ENCODE measurements at regions of chr1 and their contacts with region 1.

Region 1: DNA sequence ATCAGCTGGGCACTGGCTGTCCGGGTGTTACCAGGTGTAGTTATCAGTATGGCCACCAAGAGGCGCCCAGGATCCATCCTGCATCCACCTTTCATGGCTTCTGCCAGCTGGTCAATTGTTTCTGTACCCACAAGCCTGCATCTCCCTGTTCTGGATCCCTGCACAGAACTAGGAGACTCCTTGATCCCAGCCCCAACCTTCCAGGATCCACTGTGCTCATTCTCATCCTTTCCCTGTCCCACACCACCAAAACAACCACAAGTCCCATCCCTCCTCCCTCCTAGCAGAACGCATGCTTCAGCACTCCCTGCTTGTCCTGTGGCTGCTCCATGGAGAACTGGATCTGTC is 27.2 kb upstream of the FOXE3 start:
- DNase-seq: peak; percentile 73
- CTCF ChIP-seq: peak; percentile 56

Region 2: DNA sequence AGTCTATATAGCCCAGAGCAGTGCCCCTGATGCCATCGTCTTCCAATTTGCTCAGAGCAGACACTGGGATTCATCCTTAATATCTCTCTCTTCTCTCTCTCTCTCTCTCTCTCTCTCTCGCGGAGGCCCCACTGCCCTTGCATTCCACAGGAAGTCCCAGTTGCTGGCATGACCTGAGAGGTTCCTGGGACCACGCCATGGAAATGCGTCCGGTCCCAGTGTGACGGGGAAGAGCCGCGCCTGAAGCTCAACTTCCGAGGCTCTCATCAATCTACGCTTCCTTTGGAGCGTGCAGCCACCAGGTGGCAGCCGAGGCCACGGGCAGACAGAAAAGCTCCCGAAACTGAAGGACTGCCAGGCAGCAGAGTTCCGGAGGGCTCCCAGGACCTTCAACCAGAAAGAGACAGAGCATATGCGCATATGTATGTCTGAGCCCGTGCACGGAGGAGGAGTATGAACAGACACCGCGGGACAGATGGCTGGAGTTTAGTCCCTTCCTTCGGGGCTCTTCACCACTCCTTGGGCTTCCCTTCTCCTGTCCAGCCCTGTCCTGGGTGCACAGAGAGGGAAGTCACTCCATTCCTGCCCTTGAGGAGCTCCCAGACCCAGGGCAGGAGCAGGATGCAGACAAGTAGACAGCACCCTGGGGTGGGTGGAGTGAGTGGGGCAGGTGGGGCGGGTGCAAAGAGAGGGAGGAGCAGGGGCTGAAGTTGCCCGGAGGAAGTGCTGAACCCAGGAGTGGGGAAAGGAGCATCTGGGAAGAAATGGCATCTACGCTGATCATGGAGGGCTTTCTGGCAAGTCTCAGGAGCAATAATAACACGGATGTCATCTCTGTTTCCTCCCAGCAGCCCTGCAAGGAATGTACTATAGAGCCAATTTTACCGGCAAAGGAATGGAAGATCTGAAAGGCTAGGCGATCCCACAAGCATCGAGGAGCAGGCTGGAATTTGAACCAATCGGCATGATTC is 209.6 kb before region 1 on chr1:
- CTCF ChIA-PET with region 1: interaction called, 10 read pairs
- POLR2A ChIA-PET with region 1: no interaction called
- DNase-seq: peak; percentile 87
- CTCF ChIP-seq: peak; percentile 97

Region 3: DNA sequence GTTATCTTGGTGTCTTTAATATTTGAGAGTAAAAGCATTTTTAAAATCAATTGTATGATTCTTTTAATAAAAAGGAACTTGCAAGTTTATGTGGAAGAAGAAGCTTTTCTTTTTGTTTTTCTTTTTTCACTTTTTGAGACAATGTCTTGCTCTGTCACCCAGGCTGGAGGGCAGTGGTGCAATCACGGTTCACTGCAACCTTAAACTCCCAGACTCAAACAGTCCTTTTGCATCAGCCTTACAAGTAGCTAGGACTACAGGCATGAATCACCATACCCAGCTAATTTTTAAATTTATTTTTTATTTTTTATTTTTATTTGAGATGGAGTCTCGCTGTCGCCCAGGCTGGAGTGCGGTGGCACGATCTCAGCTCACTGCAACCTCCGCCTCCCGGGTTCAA is 21.2 kb before region 1 on chr1:
- CTCF ChIA-PET with region 1: interaction called, 13 read pairs
- POLR2A ChIA-PET with region 1: interaction called, 3 read pairs
- DNase-seq: no peak
- CTCF ChIP-seq: no peak

Region 4: DNA sequence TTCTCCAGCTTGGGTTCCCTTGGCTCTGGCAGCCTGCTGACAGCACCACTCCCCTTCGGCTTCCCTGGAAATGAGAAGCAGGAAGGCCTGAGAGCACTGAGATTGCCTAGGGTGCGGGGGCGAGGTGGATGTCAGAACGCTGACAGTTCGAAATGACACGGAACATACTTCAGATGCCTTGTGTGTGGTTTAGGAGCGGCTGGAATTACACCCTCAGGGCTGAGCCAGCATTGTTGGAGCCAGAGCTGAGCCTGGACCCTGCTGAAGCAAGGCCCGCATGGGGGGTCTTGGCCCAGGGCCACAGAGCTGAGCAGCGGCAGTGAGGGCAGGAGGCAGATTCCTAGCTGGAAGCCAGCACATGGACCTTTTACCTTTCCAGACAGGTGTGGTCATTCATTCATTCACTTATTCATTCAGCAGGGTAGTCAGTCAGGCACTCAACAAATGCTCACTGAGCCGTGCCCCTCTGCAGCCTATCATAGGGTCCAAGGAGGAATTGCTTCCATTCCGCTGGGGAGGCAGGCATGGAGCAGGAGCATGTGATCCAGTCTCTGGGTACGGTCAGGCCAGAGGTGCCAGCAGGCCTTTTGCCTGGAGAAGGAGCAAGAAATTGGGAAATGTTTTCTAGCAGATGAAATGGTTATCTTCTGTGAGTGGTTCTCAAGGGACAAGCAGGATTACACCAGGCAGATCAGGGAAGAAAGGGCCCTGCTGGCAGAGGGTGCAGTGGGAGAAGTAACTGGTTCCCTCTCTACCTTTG is 20.6 kb after region 1 on chr1:
- CTCF ChIA-PET with region 1: interaction called, 14 read pairs
- POLR2A ChIA-PET with region 1: no interaction called
- DNase-seq: no peak
- CTCF ChIP-seq: no peak

Region 5: DNA sequence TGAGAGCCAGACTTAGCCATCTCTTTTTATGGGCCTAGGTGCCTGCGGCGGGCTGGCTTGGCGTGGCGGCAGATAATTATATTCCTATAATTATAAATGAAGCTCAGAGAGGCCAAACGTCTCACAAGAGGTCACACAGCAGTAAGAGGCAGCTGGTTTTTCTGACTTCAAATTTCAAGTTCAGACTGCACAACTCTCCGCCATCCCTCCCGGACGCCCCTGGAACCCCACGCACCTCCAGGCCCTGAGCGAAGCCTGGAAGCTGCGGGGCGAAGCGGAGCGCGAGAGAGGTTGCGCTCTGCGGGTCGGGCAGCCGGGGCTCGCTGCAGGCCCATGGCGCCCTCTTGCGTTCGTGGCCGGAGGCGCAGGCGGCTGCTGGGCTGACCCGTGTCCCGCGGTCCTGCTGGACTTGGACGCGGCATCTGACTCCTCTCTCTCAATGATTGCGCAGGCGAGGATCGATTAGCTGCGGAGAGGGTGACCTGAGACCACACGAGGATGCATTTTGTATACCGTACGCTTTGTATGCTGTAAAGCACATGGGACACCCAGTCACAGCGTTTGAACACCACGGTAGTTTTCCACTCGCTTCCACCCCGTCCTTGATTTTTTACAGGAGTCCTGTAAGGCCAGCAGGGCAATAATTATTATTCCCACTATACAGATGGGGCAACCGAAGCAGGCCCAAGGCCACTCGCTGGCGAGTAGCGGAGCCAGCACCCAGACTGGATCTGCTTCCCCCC is 321.6 kb after region 1 on chr1:
- CTCF ChIA-PET with region 1: interaction called, 12 read pairs
- POLR2A ChIA-PET with region 1: no interaction called
- DNase-seq: peak; percentile 91
- CTCF ChIP-seq: peak; percentile 95

Region 6: GRCh38 chr1:47755101-47755990 is 366.5 kb after region 1 on chr1:
- CTCF ChIA-PET with region 1: interaction called, 16 read pairs
- POLR2A ChIA-PET with region 1: no interaction called
- DNase-seq: peak; percentile 73
- CTCF ChIP-seq: peak; percentile 68